MCF 10A (cell line): ENCODE measurements at regions of chr20 and their contacts with region 1.

Region 1: DNA sequence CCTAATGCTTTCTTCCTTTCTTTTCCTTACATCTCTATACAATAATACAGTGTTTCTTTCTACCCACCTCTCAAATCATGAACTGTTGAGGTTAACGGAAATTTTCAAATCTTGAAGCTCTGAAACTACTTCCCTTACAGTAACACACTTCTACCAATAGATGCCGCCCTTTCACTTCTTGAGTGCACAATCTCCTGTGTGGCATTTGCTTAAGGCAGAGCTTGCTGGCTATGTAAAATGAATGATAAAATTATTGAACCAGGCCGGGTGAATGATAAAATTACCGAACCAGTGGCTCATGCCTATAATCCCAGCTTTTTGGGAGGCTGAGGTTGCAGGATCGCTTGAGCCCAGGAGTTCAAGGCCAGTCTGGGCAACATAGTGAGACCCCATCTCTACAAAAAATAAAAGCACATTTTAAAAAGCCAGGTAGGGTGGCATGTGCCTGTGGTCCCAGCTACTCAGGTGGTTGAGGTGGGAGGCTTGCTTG is 56.8 kb downstream of the KCNS1 start:
- DNase-seq: peak; percentile 88
- H3K4me3 Mint-ChIP-seq: no peak overlapping the region
- H3K27ac Mint-ChIP-seq: peak overlapping the region; percentile 73
- H3K4me1 Mint-ChIP-seq: peaks cover 33% of the 10 kb centered on the region
- H3K27me3 Mint-ChIP-seq: no peaks in the 10 kb centered on the region
- CTCF ChIP-seq: peak; percentile 90

Region 2: DNA sequence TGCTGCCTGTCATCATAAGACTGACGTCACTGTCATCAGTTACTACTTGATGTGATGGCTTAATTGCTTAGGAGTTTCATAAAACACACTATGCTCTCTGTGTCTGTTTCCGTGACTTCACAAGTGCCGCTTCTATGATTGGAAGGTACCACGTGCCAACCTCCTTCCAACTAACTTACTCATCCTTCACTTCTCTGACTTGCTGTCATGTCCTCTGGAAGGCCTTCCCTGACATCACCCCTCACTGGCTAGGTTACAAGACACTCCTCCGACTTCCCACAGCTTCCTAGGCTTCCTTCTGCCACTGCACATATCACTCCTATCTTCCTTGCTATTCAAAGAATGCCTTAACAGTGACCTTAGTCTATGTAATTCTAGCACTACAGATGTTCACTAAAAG is 542.7 kb before region 1 on chr20:
- CTCF ChIA-PET with region 1: no interaction called
- POLR2A ChIA-PET with region 1: no interaction called
- intact Hi-C with region 1: no loop called
- DNase-seq: peak; percentile 27
- H3K4me3 Mint-ChIP-seq: no peak overlapping the region
- H3K27ac Mint-ChIP-seq: peak overlapping the region; percentile 10
- H3K4me1 Mint-ChIP-seq: peaks cover 23% of the 10 kb centered on the region
- H3K27me3 Mint-ChIP-seq: no peaks in the 10 kb centered on the region
- CTCF ChIP-seq: no peak

Region 3: DNA sequence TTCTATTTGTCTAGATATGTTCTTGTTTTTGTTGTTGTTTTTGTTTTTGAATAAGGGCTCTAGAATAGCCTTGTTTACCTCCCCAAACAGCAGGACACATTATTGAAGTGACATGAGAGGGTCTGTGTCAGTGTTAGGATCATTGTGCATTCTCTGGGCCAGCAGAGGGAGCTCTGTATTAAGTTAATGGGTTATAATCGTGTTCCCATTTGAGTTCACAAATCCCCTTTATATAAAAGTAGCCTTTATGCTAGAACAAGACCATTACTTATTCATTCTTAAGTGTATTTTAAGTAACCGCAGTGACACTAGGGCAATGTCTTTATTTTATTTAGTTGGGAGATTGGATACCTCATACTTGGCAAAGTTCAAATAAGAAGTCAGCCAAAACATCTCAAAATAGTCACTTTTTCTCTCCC is 33.0 kb before region 1 on chr20:
- CTCF ChIA-PET with region 1: interaction called, 55 read pairs
- POLR2A ChIA-PET with region 1: interaction called, 80 read pairs
- intact Hi-C with region 1: loop called (anchors 1 kb)
- DNase-seq: peak; percentile 75
- H3K4me3 Mint-ChIP-seq: no peak overlapping the region
- H3K27ac Mint-ChIP-seq: peak overlapping the region; percentile 6
- H3K4me1 Mint-ChIP-seq: peaks cover 22% of the 10 kb centered on the region
- H3K27me3 Mint-ChIP-seq: no peaks in the 10 kb centered on the region
- CTCF ChIP-seq: peak; percentile 63

Region 4: DNA sequence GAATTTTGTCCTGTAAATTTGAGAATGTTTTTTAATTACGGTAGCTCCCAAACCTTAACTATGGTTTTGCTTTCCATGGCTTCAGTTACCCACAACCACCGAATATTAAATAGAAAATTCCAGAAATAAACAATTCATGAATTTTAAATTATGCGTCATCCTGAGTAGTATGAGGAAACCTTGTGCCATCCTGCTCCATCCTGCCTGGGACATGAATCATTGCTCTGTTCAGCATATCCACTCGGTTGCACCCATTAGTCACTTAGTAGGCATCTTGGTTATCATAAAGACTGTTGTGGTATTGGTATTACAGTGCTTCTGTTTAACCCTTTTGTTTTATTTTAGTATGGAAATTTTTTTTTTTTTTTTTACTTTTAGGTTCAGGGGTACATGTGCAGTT is 17.1 kb after region 1 on chr20:
- CTCF ChIA-PET with region 1: interaction called, 48 read pairs
- POLR2A ChIA-PET with region 1: interaction called, 22 read pairs
- intact Hi-C with region 1: loop called (anchors 2 kb)
- DNase-seq: peak; percentile 92
- H3K4me3 Mint-ChIP-seq: no peak overlapping the region
- H3K27ac Mint-ChIP-seq: peak overlapping the region; percentile 85
- H3K4me1 Mint-ChIP-seq: peaks cover 39% of the 10 kb centered on the region
- H3K27me3 Mint-ChIP-seq: no peaks in the 10 kb centered on the region
- CTCF ChIP-seq: no peak

Region 5: DNA sequence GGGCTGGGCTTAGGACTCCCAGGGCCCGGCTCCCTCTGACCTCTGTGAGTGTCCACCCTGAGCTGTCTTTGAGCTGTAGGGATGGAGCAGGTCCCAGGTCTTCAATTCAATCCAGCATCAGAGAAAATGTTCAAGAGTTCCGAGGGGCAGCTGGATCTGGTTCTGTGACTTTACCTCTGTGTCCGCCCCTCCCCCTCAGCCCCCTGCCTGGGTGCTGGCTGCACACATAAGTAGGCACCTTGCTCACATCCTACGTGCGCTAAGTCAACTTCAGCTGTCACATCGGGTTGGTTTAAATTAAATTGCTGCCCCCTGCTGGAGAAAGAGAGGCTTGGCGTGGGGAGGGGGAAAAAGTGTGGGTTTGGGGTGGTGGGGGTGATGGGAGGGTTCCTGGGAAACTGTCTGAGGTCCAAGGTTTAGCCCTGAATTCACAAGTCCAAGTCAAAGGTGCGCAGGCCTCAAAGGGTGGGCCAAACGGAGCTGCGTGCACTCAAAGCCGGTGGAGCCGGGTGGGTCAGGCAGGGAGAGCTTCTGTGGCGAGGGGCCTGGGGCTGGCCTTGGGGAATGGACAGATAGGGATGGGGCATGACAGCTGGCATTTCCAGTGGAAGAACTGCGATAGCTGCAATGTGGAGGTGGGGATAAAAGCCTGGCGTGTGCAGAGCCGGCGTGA is 67.8 kb after region 1 on chr20:
- CTCF ChIA-PET with region 1: interaction called, 65 read pairs
- POLR2A ChIA-PET with region 1: interaction called, 10 read pairs
- intact Hi-C with region 1: no loop called
- DNase-seq: peak; percentile 50
- H3K4me3 Mint-ChIP-seq: no peak overlapping the region
- H3K27ac Mint-ChIP-seq: no peak overlapping the region
- H3K4me1 Mint-ChIP-seq: no peaks in the 10 kb centered on the region
- H3K27me3 Mint-ChIP-seq: peaks cover 10% of the 10 kb centered on the region
- CTCF ChIP-seq: peak; percentile 64

Region 6: DNA sequence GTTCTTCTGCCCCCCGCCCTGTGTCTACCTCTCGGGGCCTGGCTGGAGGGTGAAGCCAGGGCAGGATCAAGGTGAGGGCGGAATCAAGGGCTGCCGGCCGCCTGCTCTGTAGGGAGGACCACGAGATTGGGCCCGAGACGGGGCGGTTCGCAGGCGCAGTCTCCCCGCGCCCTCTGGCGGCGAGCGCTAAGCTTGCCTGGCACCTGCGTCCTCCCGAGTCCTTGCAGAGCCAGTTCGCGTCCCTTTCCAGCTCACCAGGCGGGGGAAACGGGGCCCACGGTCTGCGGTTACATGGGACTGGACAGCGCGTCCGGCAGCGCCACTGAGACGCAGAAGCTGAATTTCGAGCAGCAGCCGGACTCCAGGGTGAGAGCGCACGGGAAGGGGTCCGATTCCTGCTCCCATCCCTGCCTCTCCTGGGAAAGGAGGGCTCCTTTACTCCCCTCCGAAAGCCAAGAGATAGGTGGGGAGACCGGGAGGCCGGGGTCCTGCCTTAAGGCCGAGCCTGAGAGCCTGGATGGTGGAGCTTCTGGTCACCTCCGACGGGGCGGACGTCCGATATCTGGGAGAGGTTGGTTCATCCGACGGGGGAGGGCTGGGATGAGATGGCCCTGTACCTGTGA is 267.6 kb after region 1 on chr20:
- CTCF ChIA-PET with region 1: interaction called, 32 read pairs
- POLR2A ChIA-PET with region 1: interaction called, 5 read pairs
- intact Hi-C with region 1: loop called (anchors 5 kb)
- DNase-seq: peak; percentile 55
- H3K4me3 Mint-ChIP-seq: no peak overlapping the region
- H3K27ac Mint-ChIP-seq: no peak overlapping the region
- H3K4me1 Mint-ChIP-seq: no peaks in the 10 kb centered on the region
- H3K27me3 Mint-ChIP-seq: no peaks in the 10 kb centered on the region
- CTCF ChIP-seq: peak; percentile 80

Region 7: GRCh38 chr20:46883892-46884291 is 1839.8 kb after region 1 on chr20:
- CTCF ChIA-PET with region 1: no interaction called
- POLR2A ChIA-PET with region 1: no interaction called
- intact Hi-C with region 1: no loop called
- DNase-seq: no peak
- H3K4me3 Mint-ChIP-seq: no peak overlapping the region
- H3K27ac Mint-ChIP-seq: no peak overlapping the region
- H3K4me1 Mint-ChIP-seq: no peaks in the 10 kb centered on the region
- H3K27me3 Mint-ChIP-seq: peaks cover 70% of the 10 kb centered on the region
- CTCF ChIP-seq: no peak